ENCODE measurements at regions of chr19 and their contacts with region 1.

Region 1: GRCh38 chr19:34639491-34640085 is 37.4 kb downstream of the SCGB2B2 start:
- DNase-seq: peak; percentile 29
- H3K4me3 Mint-ChIP-seq: no peak overlapping the region
- H3K27ac Mint-ChIP-seq: no peak overlapping the region
- H3K4me1 Mint-ChIP-seq: no peaks in the 10 kb centered on the region
- H3K27me3 Mint-ChIP-seq: no peaks in the 10 kb centered on the region

Region 2: DNA sequence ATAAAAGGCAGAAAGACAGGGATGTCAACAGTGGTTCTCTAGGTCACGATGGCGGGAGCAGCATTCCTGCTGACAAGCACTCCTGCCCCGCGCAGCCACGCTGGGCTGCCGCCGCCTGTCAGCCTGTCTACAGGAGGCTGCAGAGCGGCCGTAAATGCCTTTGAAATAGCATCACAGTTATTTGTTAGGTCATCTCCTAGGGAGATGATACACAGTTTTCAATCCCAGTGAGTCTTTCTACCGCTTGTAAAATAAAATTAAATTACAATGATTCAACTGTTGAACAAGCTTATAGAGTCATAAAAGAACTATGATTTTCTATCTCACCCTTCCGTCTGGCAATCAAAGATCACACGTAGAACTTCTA is 1762.7 kb before region 1 on chr19:
- intact Hi-C with region 1: no loop called
- DNase-seq: no peak
- H3K4me3 Mint-ChIP-seq: no peak overlapping the region
- H3K27ac Mint-ChIP-seq: no peak overlapping the region
- H3K4me1 Mint-ChIP-seq: peaks cover 5% of the 10 kb centered on the region
- H3K27me3 Mint-ChIP-seq: no peaks in the 10 kb centered on the region

Region 3: DNA sequence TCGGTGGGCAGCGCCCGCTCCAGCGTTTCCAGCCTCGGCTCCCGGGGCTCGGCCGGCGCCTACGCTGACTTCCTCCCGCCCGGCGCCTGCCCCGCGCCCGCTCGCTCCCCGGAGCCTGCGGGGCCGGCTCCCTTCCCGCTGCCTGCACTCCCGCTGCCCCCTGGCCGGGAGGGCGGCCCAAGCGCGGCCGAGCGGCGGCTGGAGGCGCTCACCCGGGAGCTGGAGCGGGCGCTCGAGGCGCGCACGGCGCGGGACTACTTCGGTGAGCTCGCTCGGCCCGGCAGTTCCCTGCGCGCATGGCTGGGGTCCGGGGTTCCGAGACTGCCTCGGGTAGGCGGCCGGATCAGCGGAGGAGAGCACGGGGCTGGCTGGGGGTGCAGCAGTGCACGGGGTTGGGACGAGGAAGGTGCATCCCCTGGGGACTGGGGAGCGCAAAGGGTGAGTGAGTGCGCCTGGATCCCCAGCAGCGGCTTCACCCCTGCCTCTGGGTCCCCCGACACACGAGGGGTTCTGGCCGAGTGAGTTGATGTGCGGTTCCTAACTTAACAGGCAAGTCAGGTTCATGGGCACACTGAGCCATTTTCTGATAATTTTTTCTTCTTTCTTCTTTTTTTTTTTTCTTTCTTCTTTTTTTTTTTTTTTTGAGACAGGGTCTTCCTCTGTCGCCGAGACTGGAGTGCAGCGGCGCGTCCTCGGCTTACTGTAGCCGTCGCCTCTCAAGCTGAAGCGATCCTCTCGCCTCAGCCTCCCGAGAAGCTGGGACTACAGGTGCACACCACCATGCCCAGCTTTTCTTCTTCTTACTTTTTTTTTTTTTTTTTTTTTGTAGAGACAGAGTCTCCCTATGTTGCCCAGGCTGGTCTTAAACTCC is 157.0 kb before region 1 on chr19:
- intact Hi-C with region 1: no loop called
- DNase-seq: no peak
- H3K4me3 Mint-ChIP-seq: peak overlapping the region; percentile 63
- H3K27ac Mint-ChIP-seq: no peak overlapping the region
- H3K4me1 Mint-ChIP-seq: peaks cover 2% of the 10 kb centered on the region
- H3K27me3 Mint-ChIP-seq: peaks cover 44% of the 10 kb centered on the region

Region 4: DNA sequence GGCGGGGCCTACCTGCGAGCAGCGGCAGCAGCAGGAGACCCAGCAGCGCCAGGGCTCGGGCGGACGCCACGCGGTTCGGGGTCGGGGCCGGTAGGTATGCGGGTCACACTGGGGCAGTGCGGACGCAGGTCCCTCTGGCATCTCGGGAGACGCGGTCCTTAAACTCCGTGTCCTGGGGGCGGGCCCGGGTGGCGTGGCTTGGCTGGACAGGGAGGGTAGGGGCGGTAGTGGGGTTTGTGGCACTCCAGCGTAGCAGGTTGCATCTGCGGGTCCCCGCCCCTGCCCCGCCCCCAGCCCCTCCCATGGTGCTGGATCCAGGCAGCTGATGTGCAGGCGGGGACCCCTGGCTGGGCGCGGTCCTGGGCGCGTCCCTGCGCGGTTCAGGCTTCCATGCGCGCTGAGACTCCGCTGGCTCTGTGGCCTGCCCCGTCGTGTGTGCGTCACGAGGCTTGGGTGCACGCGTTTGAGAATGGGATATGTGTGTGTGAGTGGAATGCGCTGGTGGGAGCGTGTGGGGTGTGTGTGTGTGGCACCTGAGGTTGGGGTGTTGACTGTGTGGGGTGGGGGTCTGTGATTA is 62.0 kb before region 1 on chr19:
- intact Hi-C with region 1: no loop called
- DNase-seq: no peak
- H3K4me3 Mint-ChIP-seq: no peak overlapping the region
- H3K27ac Mint-ChIP-seq: no peak overlapping the region
- H3K4me1 Mint-ChIP-seq: no peaks in the 10 kb centered on the region
- H3K27me3 Mint-ChIP-seq: no peaks in the 10 kb centered on the region

Region 5: GRCh38 chr19:34712395-34713261 is 73.0 kb after region 1 on chr19:
- intact Hi-C with region 1: loop called (anchors 1 kb)
- DNase-seq: peak; percentile 33
- H3K4me3 Mint-ChIP-seq: no peak overlapping the region
- H3K27ac Mint-ChIP-seq: no peak overlapping the region
- H3K4me1 Mint-ChIP-seq: peaks cover 1% of the 10 kb centered on the region
- H3K27me3 Mint-ChIP-seq: peaks cover 3% of the 10 kb centered on the region

Region 6: DNA sequence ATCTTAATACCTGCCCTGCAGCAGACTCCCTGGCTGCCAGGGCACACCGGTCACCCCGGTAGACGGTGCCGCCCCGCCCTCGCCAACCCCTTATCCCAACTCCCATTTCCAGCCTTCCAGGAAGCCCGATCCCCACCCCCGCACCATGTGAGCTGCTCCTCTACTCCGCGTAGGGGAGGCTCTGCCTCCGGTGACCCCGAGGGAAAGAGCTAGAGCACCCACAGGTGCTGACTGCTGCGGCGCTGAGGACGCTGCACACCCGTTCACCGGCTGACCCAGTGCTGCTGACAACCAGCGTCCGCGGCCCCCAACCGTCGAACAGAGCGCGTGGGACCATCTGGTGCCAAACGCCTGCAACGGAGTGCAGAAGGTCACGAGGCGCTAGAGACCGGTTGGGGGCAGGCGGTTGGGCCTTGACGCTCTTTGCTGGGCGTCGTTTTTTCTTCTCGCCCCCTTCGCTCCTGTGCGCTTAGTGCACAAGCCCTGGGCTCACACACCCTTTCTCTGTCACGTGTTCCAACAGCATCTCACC is 193.1 kb after region 1 on chr19:
- intact Hi-C with region 1: no loop called
- DNase-seq: no peak
- H3K4me3 Mint-ChIP-seq: no peak overlapping the region
- H3K27ac Mint-ChIP-seq: no peak overlapping the region
- H3K4me1 Mint-ChIP-seq: no peaks in the 10 kb centered on the region
- H3K27me3 Mint-ChIP-seq: peaks cover 3% of the 10 kb centered on the region